ENCODE measurements at regions of chr5 and their contacts with region 1.

Region 1: GRCh38 chr5:133968049-133968980 is at the start of gene C5orf15:
- DNase-seq: peak; percentile 86 to 91
- H3K4me3 ChIP-seq: peak within 1 kb of the TSS; percentile 76 to 90 (median 88)
- H3K27ac ChIP-seq: peak within 1 kb of the TSS; percentile 87
- H3K4me1 ChIP-seq: peaks cover 0 to 3% (median under 1%) of the 10 kb centered on the region in 4 experiments; a peak in 1 of 7 replicates
- H3K27me3 ChIP-seq: no peaks in the 10 kb centered on the region
- CTCF ChIP-seq: no peak
- EP300 ChIP-seq: no peak
- POLR2A ChIP-seq: peak; percentile 64 to 85
- RAD21 ChIP-seq: no peak
- total RNA-seq, gene C5orf15: 31.7 and 33.3 TPM in 2 replicates

Region 2: GRCh38 chr5:133785182-133785581 is 183.1 kb before region 1 on chr5:
- CTCF ChIA-PET with region 1: no interaction called
- POLR2A ChIA-PET with region 1: no interaction called
- DNase-seq: no peak
- H3K4me3 ChIP-seq: no peak overlapping the region
- H3K27ac ChIP-seq: no peak overlapping the region
- H3K4me1 ChIP-seq: peaks cover 0 to 6% (median 2%) of the 10 kb centered on the region in 4 experiments; a peak in 4 of 7 replicates
- H3K27me3 ChIP-seq: peaks cover 0 to 4% (median 3%) of the 10 kb centered on the region in 4 experiments; a peak in 2 of 7 replicates
- CTCF ChIP-seq: peak; percentile 43 to 68 (median 51)
- EP300 ChIP-seq: no peak
- POLR2A ChIP-seq: no peak
- RAD21 ChIP-seq: peak; percentile 46 to 60

Region 3: GRCh38 chr5:134004592-134005375 is 36.5 kb after region 1 on chr5 and contains the start of gene VDAC1:
- CTCF ChIA-PET with region 1: interaction called, 6 read pairs
- POLR2A ChIA-PET with region 1: interaction called, 10 read pairs
- DNase-seq: peak in 1 of 2 experiments; percentile 82
- H3K4me3 ChIP-seq: peak within 1 kb of the TSS; percentile 52 to 90 (median 66)
- H3K27ac ChIP-seq: peak within 1 kb of the TSS; percentile 84; the same call in 1 of the 2 replicates
- H3K4me1 ChIP-seq: peaks cover 6 to 30% (median 14%) of the 10 kb centered on the region in 4 experiments
- H3K27me3 ChIP-seq: no peaks in the 10 kb centered on the region
- CTCF ChIP-seq: no peak
- EP300 ChIP-seq: no peak
- POLR2A ChIP-seq: peak in 1 of 2 experiments; percentile 56; a peak in 2 of 3 replicates
- RAD21 ChIP-seq: no peak
- total RNA-seq, gene VDAC1: 285 and 301 TPM in 2 replicates

Region 4: DNA sequence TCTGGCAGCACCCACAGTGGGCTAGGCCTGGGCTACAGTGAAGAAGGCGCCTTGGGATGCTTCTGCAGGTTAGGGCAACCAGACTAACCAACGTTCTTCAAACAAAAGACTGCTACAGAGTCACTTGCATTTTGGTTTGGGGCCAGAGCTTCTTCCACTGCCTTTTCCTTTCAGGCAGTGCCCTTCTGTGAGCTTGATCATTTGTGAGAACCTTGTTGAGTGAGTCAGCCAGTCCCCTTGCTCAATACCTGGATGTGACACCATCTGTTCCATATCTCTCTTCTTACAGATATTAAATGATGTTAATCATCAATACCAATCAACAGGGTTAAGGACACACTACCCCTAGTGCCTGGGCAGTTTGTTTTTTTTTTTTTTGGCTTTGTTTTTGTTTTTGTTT is 83.0 kb after region 1 on chr5:
- CTCF ChIA-PET with region 1: no interaction called
- POLR2A ChIA-PET with region 1: no interaction called
- DNase-seq: no peak
- H3K4me3 ChIP-seq: no peak overlapping the region
- H3K27ac ChIP-seq: no peak overlapping the region
- H3K4me1 ChIP-seq: peaks cover 9 to 37% (median 21%) of the 10 kb centered on the region in 4 experiments
- H3K27me3 ChIP-seq: no peaks in the 10 kb centered on the region; a peak in 1 of 7 replicates
- CTCF ChIP-seq: no peak
- EP300 ChIP-seq: no peak
- POLR2A ChIP-seq: no peak
- RAD21 ChIP-seq: no peak